ENCODE measurements at regions of chr10 and their contacts with region 1.

Region 1: DNA sequence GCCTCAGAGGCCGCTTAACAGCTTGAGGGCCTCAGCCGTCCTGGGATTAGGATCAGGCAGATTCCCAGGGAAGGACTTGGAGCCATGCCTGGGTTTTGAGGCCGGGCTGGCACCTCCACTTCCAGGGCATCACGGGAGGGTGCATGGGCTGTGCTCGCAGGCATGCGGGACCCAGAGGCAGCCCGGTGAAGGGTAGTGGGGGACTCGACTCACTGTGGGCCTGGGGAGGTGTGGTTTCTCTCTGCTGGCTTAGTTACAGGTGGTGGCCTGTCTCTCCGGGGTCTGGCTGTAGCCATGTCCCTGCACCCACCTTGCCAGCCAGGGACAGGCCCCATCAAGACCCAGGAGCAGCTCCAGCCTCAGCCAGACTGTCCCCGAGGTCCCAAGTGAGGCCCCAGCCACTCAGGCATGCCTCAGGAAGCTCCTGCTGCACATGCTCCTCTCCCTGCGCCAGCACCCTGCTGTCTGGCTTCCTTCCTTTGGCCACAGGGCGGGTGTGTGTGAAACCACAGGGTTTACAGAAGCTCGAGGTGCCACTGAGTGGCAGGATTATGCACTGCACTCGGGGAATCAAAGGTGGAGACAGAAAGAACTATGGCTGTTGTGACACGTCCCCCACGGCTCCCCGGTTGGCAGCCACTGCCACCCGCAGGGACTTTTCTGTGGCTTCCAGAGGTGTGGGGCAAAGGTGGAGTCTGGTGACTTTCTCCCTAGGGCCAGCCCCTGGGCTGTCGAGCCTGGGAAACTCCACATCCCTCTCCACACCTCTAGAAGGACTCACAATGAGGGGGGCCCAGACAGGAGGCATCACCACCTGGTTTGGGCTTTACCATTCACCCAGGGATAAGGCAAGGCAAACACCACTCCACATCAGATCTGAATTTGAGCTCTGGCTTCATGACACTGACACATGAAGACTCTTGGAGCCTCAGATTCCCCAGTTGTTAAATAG is 19.7 kb downstream of the GOLGA7B start:
- DNase-seq: peak; percentile 81 to 92
- ATAC-seq: peak; percentile 96 to 99 (median 98)
- H3K4me3 ChIP-seq: no peak overlapping the region
- H3K27ac ChIP-seq: no peak overlapping the region
- H3K4me1 ChIP-seq: peaks cover 12% of the 10 kb centered on the region
- H3K27me3 ChIP-seq: peaks cover 0 to 11% (median 4%) of the 10 kb centered on the region in 3 donors
- CTCF ChIP-seq: peak; percentile 89

Region 2: DNA sequence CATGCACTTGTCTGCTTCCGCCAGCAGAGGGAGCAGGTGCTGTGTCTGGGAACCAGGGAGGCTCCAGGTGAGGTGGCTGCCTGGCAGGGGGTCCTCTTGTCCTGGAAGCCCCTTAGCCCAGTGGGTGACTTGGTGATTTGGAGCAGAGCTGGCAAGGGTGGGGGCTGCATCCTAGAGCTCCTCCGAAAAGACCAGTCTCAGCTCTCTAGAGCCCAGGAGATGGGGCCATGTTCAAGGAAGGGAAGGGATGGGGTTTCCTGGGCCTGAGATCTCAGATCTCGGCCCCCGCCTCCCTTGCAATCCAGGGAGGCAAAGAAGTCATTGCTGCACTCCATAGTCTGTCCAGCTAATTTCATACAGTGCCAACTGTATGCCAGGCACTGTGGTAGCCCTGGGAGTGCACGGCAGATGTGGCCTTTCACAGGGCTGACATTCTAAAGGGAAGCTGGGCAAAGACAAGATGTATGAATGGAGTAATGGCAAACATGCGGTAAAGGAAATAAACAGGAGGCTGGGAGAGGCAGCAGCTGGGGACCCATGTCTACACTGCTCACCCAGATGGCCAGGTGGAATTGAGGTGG is 77.1 kb before region 1 on chr10:
- intact Hi-C with region 1: loop called (anchors 1 kb)
- DNase-seq: peak; percentile 67 to 82
- ATAC-seq: peak; percentile 81 to 95 (median 86)
- H3K4me3 ChIP-seq: no peak overlapping the region
- H3K27ac ChIP-seq: no peak overlapping the region
- H3K4me1 ChIP-seq: peaks cover 10% of the 10 kb centered on the region
- H3K27me3 ChIP-seq: peaks cover 0 to 5% (median 0%) of the 10 kb centered on the region in 3 donors
- CTCF ChIP-seq: peak; percentile 90